ENCODE measurements at regions of chr1 and their contacts with region 1.

Region 1: GRCh38 chr1:27097484-27097917 is 57.4 kb downstream of the SLC9A1 start:
- DNase-seq: peak; percentile 84
- ATAC-seq: peak; percentile 68
- H3K4me3 Mint-ChIP-seq: no peak overlapping the region
- H3K27ac Mint-ChIP-seq: no peak overlapping the region
- H3K4me1 Mint-ChIP-seq: peaks cover 27% of the 10 kb centered on the region
- H3K27me3 Mint-ChIP-seq: no peaks in the 10 kb centered on the region; the same call in 1 of the 2 replicates
- CTCF ChIP-seq: peak; percentile 99

Region 2: GRCh38 chr1:26965213-26965612 is 132.3 kb before region 1 on chr1:
- CTCF ChIA-PET with region 1: interaction called, 31 read pairs
- POLR2A ChIA-PET with region 1: no interaction called
- DNase-seq: no peak
- ATAC-seq: no peak
- H3K4me3 Mint-ChIP-seq: no peak overlapping the region
- H3K27ac Mint-ChIP-seq: no peak overlapping the region
- H3K4me1 Mint-ChIP-seq: peaks cover 18% of the 10 kb centered on the region
- H3K27me3 Mint-ChIP-seq: peaks cover 5% of the 10 kb centered on the region
- CTCF ChIP-seq: no peak

Region 3: DNA sequence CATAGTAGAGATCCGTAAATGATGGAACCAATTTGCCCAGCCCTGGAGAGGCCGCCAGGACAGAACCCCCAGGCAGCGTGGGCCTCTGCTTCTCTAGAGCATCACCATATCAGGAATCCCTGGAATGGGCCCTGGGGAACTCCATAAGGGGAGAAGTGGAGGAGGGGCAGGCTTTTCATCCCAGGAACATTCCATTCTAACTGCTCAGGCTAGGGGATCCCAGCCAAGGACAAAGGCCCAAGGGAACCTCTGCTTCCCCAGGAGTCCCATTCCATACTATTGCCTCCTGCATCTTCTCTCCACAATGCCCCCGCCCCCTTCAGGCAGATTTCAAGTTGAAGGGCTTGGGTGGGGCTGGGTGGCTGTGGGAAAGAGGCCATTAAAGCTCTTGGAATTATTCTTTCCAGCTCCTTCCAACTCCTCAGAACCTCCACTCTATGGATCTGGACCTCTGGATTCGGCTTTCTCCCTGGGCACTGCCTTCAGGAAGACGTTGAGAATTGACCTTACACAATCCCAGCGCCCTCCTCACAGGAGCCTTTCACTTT is 98.0 kb before region 1 on chr1:
- CTCF ChIA-PET with region 1: interaction called, 21 read pairs
- POLR2A ChIA-PET with region 1: no interaction called
- DNase-seq: peak; percentile 86
- ATAC-seq: peak; percentile 74
- H3K4me3 Mint-ChIP-seq: peak overlapping the region; percentile 20; the same call in 1 of the 2 replicates
- H3K27ac Mint-ChIP-seq: peak overlapping the region; percentile 97
- H3K4me1 Mint-ChIP-seq: peaks cover 92% of the 10 kb centered on the region
- H3K27me3 Mint-ChIP-seq: no peaks in the 10 kb centered on the region
- CTCF ChIP-seq: no peak

Region 4: GRCh38 chr1:27031235-27032118 is 66.0 kb before region 1 on chr1:
- CTCF ChIA-PET with region 1: interaction called, 10 read pairs
- POLR2A ChIA-PET with region 1: no interaction called
- DNase-seq: peak; percentile 65
- ATAC-seq: peak; percentile 64
- H3K4me3 Mint-ChIP-seq: peak overlapping the region; percentile 49
- H3K27ac Mint-ChIP-seq: peak overlapping the region; percentile 84
- H3K4me1 Mint-ChIP-seq: peaks cover 38% of the 10 kb centered on the region
- H3K27me3 Mint-ChIP-seq: no peaks in the 10 kb centered on the region
- CTCF ChIP-seq: no peak

Region 5: GRCh38 chr1:27071049-27071416 is 26.5 kb before region 1 on chr1:
- CTCF ChIA-PET with region 1: interaction called, 36 read pairs
- POLR2A ChIA-PET with region 1: no interaction called
- DNase-seq: peak; percentile 49
- ATAC-seq: peak; percentile 63
- H3K4me3 Mint-ChIP-seq: no peak overlapping the region
- H3K27ac Mint-ChIP-seq: no peak overlapping the region
- H3K4me1 Mint-ChIP-seq: peaks cover 15% of the 10 kb centered on the region
- H3K27me3 Mint-ChIP-seq: no peaks in the 10 kb centered on the region
- CTCF ChIP-seq: no peak